Mammary epithelial cell (primary cell): ENCODE measurements at regions of chr10 and their contacts with region 1.

Region 1: DNA sequence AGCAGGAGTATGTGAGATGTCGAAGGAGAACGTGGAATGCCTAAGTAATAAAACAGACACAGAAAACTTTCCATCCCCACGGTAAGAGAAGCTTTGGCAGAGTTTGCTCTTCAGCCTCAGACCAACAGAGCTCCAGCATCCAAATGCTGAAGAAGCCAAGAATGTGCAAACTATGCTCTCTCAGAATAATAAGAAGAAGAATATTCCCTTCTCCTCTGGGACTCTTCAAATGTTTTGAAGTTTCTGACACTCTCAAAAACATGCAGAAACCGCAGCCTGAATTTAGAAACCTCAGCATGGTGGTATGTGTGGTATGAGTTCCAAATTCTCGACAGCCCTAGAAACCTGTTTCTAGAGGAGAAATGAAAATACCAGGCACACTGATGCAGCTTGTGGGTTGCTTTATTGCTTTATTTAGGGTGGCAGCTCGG is 113.3 kb downstream of the KCNMA1 start:
- DNase-seq: peak; percentile 24
- H3K4me3 ChIP-seq: no peak overlapping the region
- H3K27ac ChIP-seq: peak overlapping the region; percentile 26
- H3K4me1 ChIP-seq: peaks cover 24% of the 10 kb centered on the region
- H3K27me3 ChIP-seq: no peaks in the 10 kb centered on the region
- CTCF ChIP-seq: no peak

Region 2: GRCh38 chr10:77592946-77593636 is 68.8 kb after region 1 on chr10:
- CTCF ChIA-PET with region 1: no interaction called
- dilution Hi-C with region 1: loop called (anchors 5 kb)
- in situ Hi-C with region 1: no loop called
- intact Hi-C with region 1: no loop called
- DNase-seq: peak; percentile 96
- H3K4me3 ChIP-seq: no peak overlapping the region
- H3K27ac ChIP-seq: peak overlapping the region; percentile 74
- H3K4me1 ChIP-seq: peaks cover 24% of the 10 kb centered on the region
- H3K27me3 ChIP-seq: no peaks in the 10 kb centered on the region
- CTCF ChIP-seq: no peak

Region 3: GRCh38 chr10:78566284-78567111 is 1042.2 kb after region 1 on chr10:
- CTCF ChIA-PET with region 1: no interaction called
- dilution Hi-C with region 1: no loop called
- in situ Hi-C with region 1: no loop called
- intact Hi-C with region 1: no loop called
- DNase-seq: no peak
- H3K4me3 ChIP-seq: no peak overlapping the region
- H3K27ac ChIP-seq: no peak overlapping the region
- H3K4me1 ChIP-seq: no peaks in the 10 kb centered on the region
- H3K27me3 ChIP-seq: peaks cover 6% of the 10 kb centered on the region
- CTCF ChIP-seq: no peak